ENCODE measurements at regions of chr14 and their contacts with region 1.

Region 1: GRCh38 chr14:50830932-50831725 is at the start of gene NIN:
- DNase-seq: peak; percentile 81
- ATAC-seq: peak; percentile 83
- H3K4me3 Mint-ChIP-seq: peak within 1 kb of the TSS; percentile 98
- H3K27ac Mint-ChIP-seq: peak within 1 kb of the TSS; percentile 98
- H3K4me1 Mint-ChIP-seq: peaks cover 72% of the 10 kb centered on the region
- H3K27me3 Mint-ChIP-seq: no peaks in the 10 kb centered on the region
- CTCF ChIP-seq: no peak
- total RNA-seq, gene NIN: 145 and 156 TPM in 2 replicates

Region 2: DNA sequence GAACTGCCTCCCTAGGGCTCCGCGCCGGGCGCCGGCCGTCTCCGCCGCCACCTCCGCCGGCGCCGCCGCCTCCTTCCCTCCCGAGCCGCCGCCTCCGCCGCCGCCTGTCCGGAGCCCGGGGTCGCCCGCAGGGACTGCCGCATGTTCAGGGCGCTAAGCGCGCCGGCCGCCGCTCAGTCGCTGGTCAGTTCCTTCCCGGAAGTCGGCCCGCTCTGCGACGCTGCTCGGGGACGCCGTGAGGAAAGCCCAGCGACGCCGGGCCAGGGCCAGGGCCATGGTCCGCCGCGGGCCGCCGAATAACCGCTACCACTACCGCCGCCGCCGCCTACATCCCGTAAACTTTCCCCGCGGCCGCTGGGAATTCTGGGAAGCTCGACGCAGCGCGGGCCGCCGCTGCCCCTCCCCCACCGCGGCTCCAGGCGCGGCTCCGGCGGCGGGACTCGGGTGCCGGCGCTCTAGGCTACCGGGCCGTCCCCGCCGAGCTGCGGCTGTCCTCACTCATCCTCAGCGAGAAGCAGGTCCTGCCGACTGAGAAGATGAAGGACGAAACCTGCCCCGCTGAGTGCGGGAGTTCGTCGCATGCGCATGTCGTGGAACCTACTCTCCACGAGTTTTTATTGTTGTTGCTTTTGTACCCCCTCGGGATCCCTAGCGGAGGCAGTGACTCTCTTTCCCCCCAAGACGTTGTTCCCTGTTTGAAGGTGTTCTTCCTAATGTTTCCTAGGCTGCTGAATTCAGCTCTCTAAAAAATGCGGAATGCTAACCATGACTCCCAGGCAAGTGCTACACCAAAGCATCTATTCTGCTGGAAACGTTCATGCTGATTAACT is 162.9 kb before region 1 on chr14 and contains the start of gene SAV1:
- CTCF ChIA-PET with region 1: no interaction called
- POLR2A ChIA-PET with region 1: interaction called, 11 read pairs
- intact Hi-C with region 1: no loop called
- DNase-seq: peak; percentile 63
- ATAC-seq: peak; percentile 65
- H3K4me3 Mint-ChIP-seq: no peak within 1 kb of the TSS
- H3K27ac Mint-ChIP-seq: no peak within 1 kb of the TSS
- H3K4me1 Mint-ChIP-seq: peaks cover 32% of the 10 kb centered on the region
- H3K27me3 Mint-ChIP-seq: no peaks in the 10 kb centered on the region
- CTCF ChIP-seq: no peak
- total RNA-seq, gene SAV1: 31.0 and 33.3 TPM in 2 replicates

Region 3: DNA sequence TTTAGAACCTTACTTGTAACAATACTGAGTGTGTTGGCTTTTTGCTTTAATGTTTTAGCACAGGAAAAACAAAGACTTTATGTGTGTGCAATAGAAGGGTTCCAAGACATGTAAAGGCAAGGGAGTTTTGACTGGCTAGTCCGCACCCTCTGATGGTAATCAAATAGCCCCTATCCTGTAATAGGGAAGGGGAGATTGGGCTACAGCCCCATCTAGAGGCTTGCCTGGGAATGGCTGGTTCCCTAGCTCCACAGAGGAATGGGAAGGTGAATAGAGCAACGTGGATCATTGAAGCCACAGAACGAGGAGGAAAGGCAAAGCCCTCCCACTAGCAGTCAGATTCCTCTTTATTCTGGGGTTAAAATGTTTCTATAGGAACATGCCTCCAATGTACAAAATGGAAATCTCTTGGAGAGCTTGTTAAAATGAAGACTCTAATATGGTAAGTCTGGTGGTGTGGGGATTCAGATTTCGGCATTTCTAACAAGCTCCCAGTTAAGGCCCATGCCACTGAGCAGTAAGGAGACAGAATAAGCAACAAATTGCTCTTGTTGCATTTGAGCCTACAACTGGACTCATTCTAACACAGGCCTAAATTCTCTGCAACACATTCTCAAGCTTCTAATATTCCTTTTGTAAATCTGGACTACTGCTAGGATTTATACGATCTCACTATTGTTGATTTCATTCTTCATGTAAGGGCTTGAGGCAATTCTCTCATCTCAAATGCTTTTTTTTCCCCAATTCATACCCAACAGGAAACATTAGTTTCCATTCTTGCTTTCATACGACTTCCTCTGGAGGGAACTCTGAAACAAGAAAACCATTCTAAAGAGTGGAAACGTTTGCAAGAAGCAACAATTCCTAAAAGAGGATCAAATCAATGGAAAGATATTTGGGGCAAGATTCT is 57.2 kb before region 1 on chr14:
- CTCF ChIA-PET with region 1: interaction called, 21 read pairs
- POLR2A ChIA-PET with region 1: interaction called, 5 read pairs
- intact Hi-C with region 1: loop called (anchors 1 kb)
- DNase-seq: no peak
- ATAC-seq: peak; percentile 67
- H3K4me3 Mint-ChIP-seq: no peak overlapping the region
- H3K27ac Mint-ChIP-seq: no peak overlapping the region
- H3K4me1 Mint-ChIP-seq: peaks cover 17% of the 10 kb centered on the region
- H3K27me3 Mint-ChIP-seq: no peaks in the 10 kb centered on the region
- CTCF ChIP-seq: no peak

Region 4: DNA sequence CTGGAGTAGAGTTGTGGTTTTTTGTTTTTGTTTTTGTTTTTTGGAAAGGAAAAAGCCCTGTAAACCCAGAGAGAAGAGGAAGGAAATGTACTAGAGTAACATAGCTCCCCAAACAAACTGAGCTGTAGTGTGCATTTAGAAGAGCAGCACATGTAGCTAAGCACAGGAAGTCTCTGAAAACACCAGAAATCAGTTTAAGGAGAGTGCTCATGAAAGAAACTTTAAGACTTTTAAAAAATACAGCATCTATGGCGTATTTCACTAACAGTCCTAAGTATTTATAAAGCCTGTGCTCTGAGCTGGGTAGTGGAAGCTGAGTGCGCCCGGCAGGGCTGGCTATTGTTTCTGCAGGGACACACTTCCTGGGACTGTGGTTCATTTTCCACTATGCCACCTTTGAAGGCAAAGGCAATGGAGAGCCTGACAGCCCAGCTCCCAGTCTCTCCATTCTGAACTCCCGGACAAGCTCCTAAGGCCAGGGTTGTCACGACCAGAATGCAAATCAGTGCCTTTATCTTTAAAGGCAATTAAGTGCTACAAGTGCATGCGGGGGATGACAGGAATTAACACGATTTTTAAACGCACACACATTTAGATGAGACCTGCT is 45.6 kb before region 1 on chr14:
- CTCF ChIA-PET with region 1: interaction called, 47 read pairs
- POLR2A ChIA-PET with region 1: interaction called, 143 read pairs
- intact Hi-C with region 1: loop called (anchors 1 kb)
- DNase-seq: no peak
- ATAC-seq: no peak
- H3K4me3 Mint-ChIP-seq: peak overlapping the region; percentile 24
- H3K27ac Mint-ChIP-seq: peak overlapping the region; percentile 71
- H3K4me1 Mint-ChIP-seq: peaks cover 72% of the 10 kb centered on the region
- H3K27me3 Mint-ChIP-seq: no peaks in the 10 kb centered on the region
- CTCF ChIP-seq: no peak

Region 5: GRCh38 chr14:50798048-50798421 is 33.1 kb before region 1 on chr14:
- CTCF ChIA-PET with region 1: interaction called, 47 read pairs
- POLR2A ChIA-PET with region 1: interaction called, 143 read pairs
- intact Hi-C with region 1: no loop called
- DNase-seq: no peak
- ATAC-seq: peak; percentile 86
- H3K4me3 Mint-ChIP-seq: peak overlapping the region; percentile 58
- H3K27ac Mint-ChIP-seq: peak overlapping the region; percentile 51
- H3K4me1 Mint-ChIP-seq: peaks cover 74% of the 10 kb centered on the region
- H3K27me3 Mint-ChIP-seq: no peaks in the 10 kb centered on the region
- CTCF ChIP-seq: no peak

Measured in activated B cell treated with CpG ODN at 0.5 μM for 24 hours (primary cell).